ENCODE measurements at regions of chr10 and their contacts with region 1.

Region 1: GRCh38 chr10:116787893-116788665 is 45.7 kb upstream of the HSPA12A start:
- DNase-seq: peak; percentile 70 to 86
- H3K4me3 ChIP-seq: peak overlapping the region; percentile 25; the same call in 1 of the 2 replicates
- H3K4me3 Mint-ChIP-seq: peak overlapping the region; percentile 53
- H3K27ac Mint-ChIP-seq: no peak overlapping the region
- H3K4me1 ChIP-seq: 0 out of 2 replicates have a peak, but pooled peaks cover 4% of the 10 kb centered on the region
- H3K4me1 Mint-ChIP-seq: no peaks in the 10 kb centered on the region
- H3K27me3 ChIP-seq: no peaks in the 10 kb centered on the region
- H3K27me3 Mint-ChIP-seq: peaks cover 11% of the 10 kb centered on the region
- CTCF ChIP-seq: peak; percentile 95 to 96

Region 2: DNA sequence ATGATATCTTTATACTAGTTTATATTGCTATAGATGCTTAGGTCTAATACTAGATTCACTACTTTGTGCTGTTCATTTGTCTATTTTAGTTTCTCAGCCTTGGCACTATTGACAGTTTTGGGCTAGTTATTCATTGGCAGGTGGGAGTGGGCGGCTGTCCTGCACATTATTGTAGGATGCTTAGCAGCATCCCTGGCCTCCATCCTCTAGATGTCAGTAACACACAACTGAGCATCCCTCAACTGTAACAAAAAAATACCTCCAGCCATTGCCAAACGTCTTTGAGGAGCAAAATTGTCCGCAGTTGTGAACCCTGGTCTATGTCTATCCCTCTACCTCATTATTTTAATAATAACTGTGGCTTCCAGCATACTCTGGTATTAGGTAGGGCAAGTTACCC is 276.7 kb before region 1 on chr10:
- CTCF ChIA-PET with region 1: no interaction called
- POLR2A ChIA-PET with region 1: interaction called, 3 read pairs
- intact Hi-C with region 1: loop called (anchors 5 kb)
- DNase-seq: peak in 1 of 2 experiments; percentile 9
- H3K4me3 ChIP-seq: no peak overlapping the region
- H3K4me3 Mint-ChIP-seq: no peak overlapping the region
- H3K27ac Mint-ChIP-seq: no peak overlapping the region
- H3K4me1 ChIP-seq: no peaks in the 10 kb centered on the region
- H3K4me1 Mint-ChIP-seq: no peaks in the 10 kb centered on the region
- H3K27me3 ChIP-seq: no peaks in the 10 kb centered on the region
- H3K27me3 Mint-ChIP-seq: peaks cover 27% of the 10 kb centered on the region
- CTCF ChIP-seq: no peak

Region 3: DNA sequence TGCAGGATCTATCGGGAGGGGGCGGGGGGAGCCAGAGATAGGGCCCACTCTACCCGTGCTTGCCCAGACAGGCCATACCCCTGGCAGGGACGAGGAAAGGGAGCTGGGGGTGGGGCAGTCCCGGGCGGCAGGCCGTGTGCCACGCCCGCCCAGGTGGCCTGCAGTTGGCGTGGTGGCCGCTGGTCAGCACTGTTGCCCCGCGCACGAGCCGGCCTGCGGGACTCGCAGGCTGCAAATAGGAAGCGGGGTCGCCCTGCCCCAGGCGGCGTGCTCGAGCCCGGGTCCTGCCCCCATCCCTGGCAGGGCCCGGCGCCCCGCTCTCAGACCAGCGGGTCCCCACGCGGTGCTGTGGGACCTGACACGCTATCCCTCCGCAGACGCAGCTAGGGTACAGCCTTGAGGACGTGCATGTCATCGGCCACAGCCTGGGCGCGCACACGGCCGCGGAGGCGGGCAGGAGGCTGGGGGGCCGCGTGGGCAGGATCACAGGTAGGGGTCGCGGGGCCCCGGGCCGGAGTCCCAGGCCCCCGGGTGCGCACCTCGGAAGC is 160.6 kb before region 1 on chr10:
- CTCF ChIA-PET with region 1: interaction called, 20 read pairs
- POLR2A ChIA-PET with region 1: interaction called, 3 read pairs
- intact Hi-C with region 1: loop called (anchors 1 kb)
- DNase-seq: peak; percentile 58 to 81
- H3K4me3 ChIP-seq: peak overlapping the region; percentile 58
- H3K4me3 Mint-ChIP-seq: peak overlapping the region; percentile 29
- H3K27ac Mint-ChIP-seq: no peak overlapping the region
- H3K4me1 ChIP-seq: no peaks in the 10 kb centered on the region
- H3K4me1 Mint-ChIP-seq: no peaks in the 10 kb centered on the region
- H3K27me3 ChIP-seq: no peaks in the 10 kb centered on the region
- H3K27me3 Mint-ChIP-seq: no peaks in the 10 kb centered on the region
- CTCF ChIP-seq: peak; percentile 68 to 80

Region 4: DNA sequence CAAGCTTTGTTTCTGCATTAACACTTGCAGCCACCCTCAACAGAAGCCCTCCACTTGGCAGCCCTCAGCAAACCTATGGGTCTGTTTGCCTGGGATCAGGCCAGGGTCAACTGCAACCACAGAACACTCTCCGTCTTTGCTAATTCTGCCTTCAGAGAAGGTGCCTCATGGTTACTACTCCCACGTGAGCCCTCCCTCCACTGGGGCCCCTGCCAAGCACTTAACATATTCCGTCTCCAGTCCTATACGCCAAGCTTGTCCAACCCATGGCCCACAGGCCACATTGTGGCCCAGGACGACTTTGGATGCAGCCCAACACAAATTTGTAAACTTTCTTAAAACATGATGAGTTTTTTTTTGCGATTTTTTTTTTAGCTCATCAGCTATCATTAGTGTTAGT is 100.4 kb before region 1 on chr10:
- CTCF ChIA-PET with region 1: interaction called, 12 read pairs
- POLR2A ChIA-PET with region 1: no interaction called
- intact Hi-C with region 1: loop called (anchors 1 kb)
- DNase-seq: no peak
- H3K4me3 ChIP-seq: no peak overlapping the region
- H3K4me3 Mint-ChIP-seq: no peak overlapping the region
- H3K27ac Mint-ChIP-seq: no peak overlapping the region
- H3K4me1 ChIP-seq: no peaks in the 10 kb centered on the region
- H3K4me1 Mint-ChIP-seq: no peaks in the 10 kb centered on the region
- H3K27me3 ChIP-seq: no peaks in the 10 kb centered on the region
- H3K27me3 Mint-ChIP-seq: no peaks in the 10 kb centered on the region
- CTCF ChIP-seq: no peak

Region 5: GRCh38 chr10:116704926-116705325 is 83.2 kb before region 1 on chr10:
- CTCF ChIA-PET with region 1: no interaction called
- POLR2A ChIA-PET with region 1: no interaction called
- intact Hi-C with region 1: no loop called
- DNase-seq: no peak
- H3K4me3 ChIP-seq: no peak overlapping the region
- H3K4me3 Mint-ChIP-seq: no peak overlapping the region
- H3K27ac Mint-ChIP-seq: no peak overlapping the region
- H3K4me1 ChIP-seq: no peaks in the 10 kb centered on the region
- H3K4me1 Mint-ChIP-seq: no peaks in the 10 kb centered on the region
- H3K27me3 ChIP-seq: no peaks in the 10 kb centered on the region
- H3K27me3 Mint-ChIP-seq: no peaks in the 10 kb centered on the region
- CTCF ChIP-seq: no peak

Region 6: DNA sequence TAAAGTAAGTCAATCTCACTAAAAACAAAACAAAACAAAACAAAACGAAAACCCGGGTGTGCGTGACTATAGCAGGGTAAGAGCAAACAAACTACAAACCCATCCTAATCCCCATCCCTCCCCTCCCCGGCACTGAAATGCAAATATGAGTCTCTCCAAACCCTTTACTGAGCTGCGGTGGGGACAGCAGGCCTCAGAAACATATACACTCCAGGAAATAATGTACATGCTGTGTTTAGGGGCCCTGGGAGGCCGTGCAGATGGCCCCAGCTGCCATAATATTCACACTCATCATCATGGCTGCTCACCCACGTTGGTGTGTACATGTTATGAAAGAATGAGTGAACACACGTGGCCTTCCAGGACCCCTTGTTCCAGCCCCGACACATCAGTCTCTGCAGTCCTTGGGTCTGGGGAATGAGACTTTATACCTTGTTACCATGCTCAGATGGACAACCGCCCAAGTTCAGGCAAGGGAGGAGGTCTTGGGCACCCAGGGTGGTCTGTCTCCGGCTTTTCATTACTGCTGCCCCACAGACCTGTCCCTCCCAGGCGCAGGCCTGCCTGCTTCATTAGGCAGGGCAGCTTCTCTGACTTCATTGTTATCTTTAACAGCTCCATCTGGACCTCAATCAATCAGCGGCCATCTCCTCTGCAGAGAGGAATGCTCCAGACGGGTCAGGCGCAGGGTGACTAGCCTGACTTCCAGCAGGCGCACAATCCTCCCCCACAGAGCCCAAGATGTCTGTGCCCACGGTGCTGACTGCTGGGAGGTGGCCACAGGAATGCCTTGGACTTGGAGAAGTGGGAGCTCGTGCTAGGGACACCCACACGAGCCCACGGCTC is 66.3 kb before region 1 on chr10:
- CTCF ChIA-PET with region 1: interaction called, 3 read pairs
- POLR2A ChIA-PET with region 1: no interaction called
- intact Hi-C with region 1: loop called (anchors 2 kb)
- DNase-seq: peak in 1 of 2 experiments; percentile 39
- H3K4me3 ChIP-seq: no peak overlapping the region
- H3K4me3 Mint-ChIP-seq: peak overlapping the region; percentile 49
- H3K27ac Mint-ChIP-seq: peak overlapping the region; percentile 64
- H3K4me1 ChIP-seq: peaks cover 47% of the 10 kb centered on the region
- H3K4me1 Mint-ChIP-seq: peaks cover 24% of the 10 kb centered on the region
- H3K27me3 ChIP-seq: no peaks in the 10 kb centered on the region
- H3K27me3 Mint-ChIP-seq: no peaks in the 10 kb centered on the region
- CTCF ChIP-seq: no peak

Region 7: DNA sequence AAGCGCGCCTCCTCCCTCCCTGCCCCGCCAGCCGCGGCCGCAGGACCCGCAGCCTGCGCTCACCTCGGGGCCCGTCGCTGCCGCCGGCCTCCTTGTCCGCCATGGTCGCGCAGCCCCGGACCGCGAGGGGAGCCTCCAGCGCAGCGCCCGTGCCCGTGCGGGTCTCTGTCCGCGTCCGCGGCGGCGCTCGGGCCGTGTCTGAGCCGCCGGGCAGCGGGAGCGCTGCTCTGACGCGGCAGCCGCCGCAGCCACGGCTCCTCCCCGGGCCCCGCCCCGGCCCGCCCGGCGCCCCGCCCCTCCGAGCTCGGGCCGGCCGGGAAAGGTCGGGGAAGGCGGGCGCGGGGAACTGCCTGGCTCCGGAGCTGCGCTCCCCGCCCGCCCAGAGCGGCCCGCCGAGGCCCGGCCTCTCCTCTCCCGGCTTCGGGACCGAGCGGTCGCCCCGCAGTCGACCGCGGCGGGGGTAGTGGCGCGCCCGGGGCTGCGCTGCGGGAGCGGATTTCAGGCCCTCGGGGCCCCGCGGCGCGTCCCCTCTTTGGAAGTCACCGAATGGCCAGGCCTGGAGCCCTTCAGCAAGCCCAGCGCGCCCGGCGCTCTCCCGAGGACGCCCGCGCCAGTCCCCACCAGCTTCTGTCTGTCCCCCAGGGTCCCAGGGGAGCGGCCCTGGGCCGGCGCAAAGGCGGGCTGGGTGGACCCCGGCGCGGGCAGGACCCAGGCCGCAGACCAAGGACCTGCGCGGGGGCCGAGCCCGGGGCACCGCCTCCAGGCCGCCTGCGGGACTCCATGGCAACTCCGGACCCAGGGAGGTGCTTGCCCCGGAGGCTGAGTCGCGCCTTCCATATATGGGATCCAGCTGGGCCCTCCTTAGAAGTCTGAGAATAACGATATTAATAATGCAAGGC is 45.5 kb before region 1 on chr10 and contains the start of gene HSPA12A:
- CTCF ChIA-PET with region 1: no interaction called
- POLR2A ChIA-PET with region 1: no interaction called
- intact Hi-C with region 1: loop called (anchors 2 kb)
- DNase-seq: peak; percentile 62 to 87
- H3K4me3 ChIP-seq: peak within 1 kb of the TSS; percentile 62
- H3K4me3 Mint-ChIP-seq: peak within 1 kb of the TSS; percentile 69
- H3K27ac Mint-ChIP-seq: no peak within 1 kb of the TSS
- H3K4me1 ChIP-seq: no peaks in the 10 kb centered on the region
- H3K4me1 Mint-ChIP-seq: no peaks in the 10 kb centered on the region
- H3K27me3 ChIP-seq: no peaks in the 10 kb centered on the region
- H3K27me3 Mint-ChIP-seq: no peaks in the 10 kb centered on the region
- CTCF ChIP-seq: no peak
- total RNA-seq, gene HSPA12A: 22.9 and 27.0 TPM in 2 replicates

Measured in Caco-2 (cell line).